ENCODE measurements at regions of chr22 and their contacts with region 1.

Region 1: DNA sequence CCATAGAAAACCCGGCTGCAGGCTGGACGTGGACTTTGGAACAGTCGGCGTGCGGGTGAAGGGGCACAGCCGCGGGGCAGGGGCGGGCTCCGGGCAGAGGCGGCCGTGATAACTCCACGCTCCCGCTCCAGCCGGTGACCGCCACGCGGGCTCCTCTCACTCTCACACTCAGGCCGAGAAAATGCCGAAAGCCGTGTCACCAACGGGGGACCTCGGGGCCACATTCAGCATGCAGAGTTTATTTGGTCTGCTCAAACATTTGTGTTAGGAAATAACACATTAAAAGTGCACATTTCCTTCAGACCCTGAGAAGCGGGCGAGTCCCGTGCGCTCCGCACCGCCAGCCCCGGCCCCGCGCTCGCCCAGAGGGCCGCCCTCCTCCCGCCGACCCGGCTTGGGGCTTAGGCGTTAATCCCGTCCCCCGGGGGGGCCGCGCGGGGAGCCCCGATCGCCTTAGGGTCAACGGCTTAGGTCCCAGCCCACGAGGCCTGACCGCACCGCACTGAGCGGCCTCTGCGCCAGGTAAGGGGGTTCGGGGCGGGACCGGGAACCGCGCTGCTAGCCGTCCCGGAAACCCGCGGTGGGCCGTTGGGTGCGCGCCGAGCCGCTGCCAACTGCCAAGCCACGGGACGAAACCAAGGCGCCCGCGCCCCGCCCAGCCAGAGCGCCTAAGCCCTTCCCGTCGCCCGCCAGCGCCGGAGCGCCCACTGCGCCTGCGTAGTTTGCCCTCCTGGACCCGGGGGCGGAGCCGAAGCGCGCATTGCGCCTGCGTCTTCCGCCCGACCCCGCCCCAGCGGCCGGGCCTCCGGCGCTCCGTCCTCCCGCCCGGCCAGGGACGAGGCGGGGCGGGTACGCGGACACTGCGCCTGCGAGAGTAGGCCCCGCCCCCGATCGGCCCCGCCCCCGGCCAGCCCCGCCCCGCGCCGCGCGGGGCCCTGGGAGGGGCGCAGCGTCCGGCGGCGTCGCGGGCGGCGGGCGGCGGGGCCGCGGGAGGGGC is at the start of gene ZBED4:
- DNase-seq: peak; percentile 89 to 99 (median 92)

Region 2: GRCh38 chr22:49690454-49690853 is 162.7 kb before region 1 on chr22:
- intact Hi-C with region 1: no loop called
- DNase-seq: no peak

Region 3: DNA sequence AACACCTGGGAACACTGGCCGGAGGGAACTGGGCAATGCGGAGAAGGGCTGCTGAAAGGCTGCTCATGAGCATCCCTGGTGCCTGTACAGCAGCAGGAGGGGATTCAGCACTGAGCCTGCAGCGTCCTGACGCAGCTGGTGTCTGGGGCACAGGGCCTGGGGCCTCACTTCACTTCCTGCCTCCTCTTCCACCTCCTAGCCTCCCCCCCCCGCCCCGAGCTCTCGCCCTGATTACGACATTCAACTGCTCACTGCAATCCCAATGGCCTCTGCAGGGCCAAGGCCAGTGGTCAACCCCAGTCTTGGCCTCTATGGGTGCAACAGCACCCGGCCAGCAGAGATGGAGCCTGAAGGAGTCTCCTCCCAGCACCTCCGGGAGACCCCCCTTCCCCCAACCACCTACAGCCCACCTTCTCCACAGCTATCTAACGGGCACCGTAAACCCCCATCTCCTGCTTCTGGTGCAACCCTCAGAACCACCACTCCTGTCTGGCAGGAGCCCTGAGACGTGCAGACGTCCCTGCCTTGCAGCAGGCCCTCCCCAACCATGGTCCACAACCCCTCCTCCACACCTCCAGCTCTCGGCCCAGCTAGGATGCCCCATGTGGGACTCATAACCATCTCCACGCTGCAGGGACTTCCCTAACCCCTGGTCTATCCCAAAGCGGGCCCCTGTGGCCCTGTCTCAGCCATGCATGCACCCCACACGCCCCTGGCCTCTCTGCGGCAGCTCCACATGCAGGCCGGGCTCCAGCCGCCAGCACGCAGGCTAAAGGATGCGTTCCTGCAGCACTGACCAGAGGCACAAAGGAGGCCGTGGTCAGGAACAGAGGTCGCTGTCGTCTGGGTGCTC is 63.7 kb before region 1 on chr22:
- intact Hi-C with region 1: no loop called
- DNase-seq: peak in 3 of 10 donors; percentile 9 to 83 (median 44)

Region 4: DNA sequence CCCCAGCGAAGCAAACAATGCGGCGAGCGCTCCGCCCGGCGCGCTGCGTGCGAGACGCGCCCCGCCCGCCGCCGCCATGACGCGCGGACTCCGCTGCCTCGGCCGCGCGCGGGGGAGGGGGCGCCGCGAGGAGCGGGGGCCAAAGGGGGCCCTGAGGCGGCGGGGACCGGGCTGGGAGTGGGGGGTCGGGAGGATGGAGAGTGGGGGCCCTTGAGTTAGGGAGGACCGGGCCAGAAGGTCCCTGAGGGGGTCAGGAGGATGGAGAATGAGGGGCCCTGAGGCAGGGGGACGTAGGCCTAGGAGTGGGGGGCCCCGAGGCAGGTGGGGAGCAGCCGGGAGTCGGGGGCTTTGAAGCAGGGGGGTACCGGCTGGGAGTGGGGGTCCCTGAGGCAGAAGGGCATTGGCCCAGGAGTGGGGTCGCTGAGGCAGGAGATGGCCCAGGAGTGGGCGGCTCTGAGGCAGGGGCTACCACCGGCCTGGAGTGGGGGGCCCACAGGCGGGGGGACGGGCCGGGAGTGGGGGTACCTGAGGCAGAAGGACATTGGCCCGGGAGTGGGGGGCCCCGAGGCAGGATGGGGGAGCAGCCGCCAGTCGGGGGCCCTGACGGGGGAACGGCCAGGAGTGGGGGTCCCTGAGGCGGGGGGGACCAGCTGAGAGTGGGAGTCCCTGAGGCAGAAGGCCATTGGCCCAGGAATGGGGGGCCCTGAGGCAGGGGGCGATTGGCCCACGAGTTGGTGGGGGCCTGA is 25.2 kb before region 1 on chr22 and contains the start of gene BRD1:
- intact Hi-C with region 1: loop called (anchors 2 kb)
- DNase-seq: peak in 9 of 10 donors; percentile 26 to 92 (median 53)

Region 5: GRCh38 chr22:49917974-49918910 is 65.0 kb after region 1 on chr22 and contains the starts of genes ALG12 and CRELD2:
- intact Hi-C with region 1: loop called (anchors 2 kb)
- DNase-seq: peak; percentile 96 to 100 (median 99)

Measured in posterior cingulate gyrus (tissue), 11 donors.